HCT116 (cell line): ENCODE measurements at regions of chr4 and their contacts with region 1.

Region 1: GRCh38 chr4:145618932-145619638 is at the start of gene MMAA:
- DNase-seq: peak; percentile 82
- ATAC-seq: peak; percentile 97
- H3K4me3 ChIP-seq: peak within 1 kb of the TSS; percentile 82 to 85
- H3K27ac ChIP-seq: peak within 1 kb of the TSS; percentile 75
- H3K4me1 ChIP-seq: peaks cover 4 to 24% of the 10 kb centered on the region in 2 experiments
- H3K27me3 ChIP-seq: no peaks in the 10 kb centered on the region
- CTCF ChIP-seq: peak; percentile 55 to 75 (median 70); a peak in 5 of 6 replicates
- POLR2A ChIP-seq: peak; percentile 53
- RAD21 ChIP-seq: no peak
- total RNA-seq, gene MMAA: 3.6 TPM

Region 2: GRCh38 chr4:145097821-145098674 is 521.0 kb before region 1 on chr4 and contains the starts of genes ABCE1 and ANAPC10:
- CTCF ChIA-PET with region 1: no interaction called
- POLR2A ChIA-PET with region 1: no interaction called
- RAD21 ChIA-PET with region 1: no interaction called
- intact Hi-C with region 1: loop called (anchors 2 kb)
- DNase-seq: peak; percentile 96
- ATAC-seq: peak; percentile 92
- H3K4me3 ChIP-seq: peak within 1 kb of the TSS; percentile 87 to 94
- H3K27ac ChIP-seq: peak within 1 kb of the TSS; percentile 81
- H3K4me1 ChIP-seq: peaks cover 4 to 16% of the 10 kb centered on the region in 2 experiments
- H3K27me3 ChIP-seq: no peaks in the 10 kb centered on the region
- CTCF ChIP-seq: peak; percentile 5 to 41 (median 11); a peak in 2 of 6 replicates
- POLR2A ChIP-seq: peak; percentile 82
- RAD21 ChIP-seq: peak; percentile 42
- total RNA-seq, gene ABCE1: 145 TPM
- total RNA-seq, gene ANAPC10: 27.2 TPM

Region 3: DNA sequence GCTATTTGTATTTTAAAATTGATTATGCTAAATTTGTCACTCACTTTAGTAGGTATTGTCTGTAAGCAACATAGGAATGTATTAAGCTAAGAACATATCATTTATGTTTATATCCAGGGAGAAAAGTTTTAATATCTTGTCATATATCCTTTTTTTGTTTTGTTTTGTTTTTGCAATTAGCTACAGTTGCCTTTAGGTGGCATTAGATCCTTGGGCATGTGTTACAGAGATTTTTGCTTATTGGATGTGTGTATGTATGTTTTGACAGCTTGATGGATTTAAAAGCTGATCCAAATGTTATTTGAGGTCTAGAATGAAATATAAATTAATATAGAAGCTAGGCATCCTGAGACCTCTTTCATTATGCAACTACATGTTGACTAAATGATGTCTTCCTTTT is 402.6 kb before region 1 on chr4:
- CTCF ChIA-PET with region 1: interaction called, 54 read pairs
- POLR2A ChIA-PET with region 1: interaction called, 4 read pairs
- RAD21 ChIA-PET with region 1: interaction called, 7 to 9 read pairs
- intact Hi-C with region 1: no loop called
- DNase-seq: peak; percentile 24
- ATAC-seq: peak; percentile 46; the same call in 1 of the 2 replicates
- H3K4me3 ChIP-seq: no peak overlapping the region
- H3K27ac ChIP-seq: no peak overlapping the region
- H3K4me1 ChIP-seq: no peaks in the 10 kb centered on the region
- H3K27me3 ChIP-seq: no peaks in the 10 kb centered on the region
- CTCF ChIP-seq: peak; percentile 49 to 75 (median 72); a peak in 5 of 6 replicates
- POLR2A ChIP-seq: no peak
- RAD21 ChIP-seq: peak; percentile 87

Region 4: GRCh38 chr4:145808021-145808650 is 189.1 kb after region 1 on chr4:
- CTCF ChIA-PET with region 1: no interaction called
- POLR2A ChIA-PET with region 1: no interaction called
- RAD21 ChIA-PET with region 1: no interaction called
- intact Hi-C with region 1: loop called (anchors 5 kb)
- DNase-seq: peak; percentile 96
- ATAC-seq: peak; percentile 84
- H3K4me3 ChIP-seq: peak overlapping the region; percentile 6 to 23; a peak in 2 of 4 replicates
- H3K27ac ChIP-seq: peak overlapping the region; percentile 88
- H3K4me1 ChIP-seq: peaks cover 46 to 90% of the 10 kb centered on the region in 2 experiments
- H3K27me3 ChIP-seq: no peaks in the 10 kb centered on the region
- CTCF ChIP-seq: no peak
- POLR2A ChIP-seq: no peak
- RAD21 ChIP-seq: peak; percentile 37

Region 5: DNA sequence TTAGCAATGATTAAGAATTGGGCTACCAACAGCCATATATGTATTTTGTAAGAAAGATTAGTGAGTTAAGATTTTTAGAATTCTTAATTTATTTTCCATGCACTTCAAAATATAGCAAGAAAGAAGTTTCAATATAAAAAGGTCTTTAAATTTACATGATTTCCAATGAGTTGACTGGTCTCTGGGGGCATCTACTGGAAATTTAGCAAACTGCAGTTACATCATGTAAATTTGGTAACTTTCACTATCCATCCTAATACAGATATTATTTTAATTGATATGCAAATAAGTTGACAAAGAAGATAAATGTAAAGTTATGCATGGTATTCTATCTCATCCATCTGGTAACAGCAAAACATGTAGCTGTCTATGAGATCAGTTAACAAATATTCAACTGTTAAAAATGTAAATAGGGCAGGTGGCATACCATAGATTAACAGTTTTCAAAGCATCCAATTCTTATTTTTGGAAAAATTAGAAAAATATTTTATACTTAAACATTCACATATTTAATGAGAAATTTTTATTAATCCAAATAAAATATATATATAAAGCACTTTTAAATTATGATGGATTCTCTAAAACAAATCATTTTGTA is 1297.5 kb after region 1 on chr4:
- CTCF ChIA-PET with region 1: no interaction called
- POLR2A ChIA-PET with region 1: no interaction called
- RAD21 ChIA-PET with region 1: no interaction called
- intact Hi-C with region 1: loop called (anchors 10 kb)
- DNase-seq: peak; percentile 26
- ATAC-seq: no peak
- H3K4me3 ChIP-seq: no peak overlapping the region
- H3K27ac ChIP-seq: no peak overlapping the region
- H3K4me1 ChIP-seq: no peaks in the 10 kb centered on the region
- H3K27me3 ChIP-seq: peaks cover 56% of the 10 kb centered on the region
- CTCF ChIP-seq: peak; percentile 55 to 76 (median 67); a peak in 5 of 6 replicates
- POLR2A ChIP-seq: no peak
- RAD21 ChIP-seq: peak; percentile 83